ENCODE measurements at regions of chr18 and their contacts with region 1.

Region 1: GRCh38 chr18:54269893-54270844 is 852 bp downstream of the POLI start:
- DNase-seq: peak; percentile 57
- ATAC-seq: peak; percentile 88
- H3K4me3 Mint-ChIP-seq: peak overlapping the region; percentile 79
- H3K27ac Mint-ChIP-seq: peak overlapping the region; percentile 98
- H3K4me1 Mint-ChIP-seq: peaks cover 32% of the 10 kb centered on the region
- H3K27me3 Mint-ChIP-seq: no peaks in the 10 kb centered on the region
- CTCF ChIP-seq: peak; percentile 11; the same call in 1 of the 2 replicates

Region 2: GRCh38 chr18:54224379-54225014 is 45.7 kb before region 1 on chr18 and contains the start of gene MBD2:
- CTCF ChIA-PET with region 1: interaction called, 21 read pairs
- POLR2A ChIA-PET with region 1: interaction called, 11 read pairs
- DNase-seq: peak; percentile 95
- ATAC-seq: peak; percentile 97
- H3K4me3 Mint-ChIP-seq: peak within 1 kb of the TSS; percentile 90
- H3K27ac Mint-ChIP-seq: peak within 1 kb of the TSS; percentile 91
- H3K4me1 Mint-ChIP-seq: peaks cover 52% of the 10 kb centered on the region
- H3K27me3 Mint-ChIP-seq: no peaks in the 10 kb centered on the region
- CTCF ChIP-seq: no peak
- total RNA-seq, gene MBD2: 32.8 to 42.7 TPM (median 37.4 TPM) in 3 replicates

Region 3: DNA sequence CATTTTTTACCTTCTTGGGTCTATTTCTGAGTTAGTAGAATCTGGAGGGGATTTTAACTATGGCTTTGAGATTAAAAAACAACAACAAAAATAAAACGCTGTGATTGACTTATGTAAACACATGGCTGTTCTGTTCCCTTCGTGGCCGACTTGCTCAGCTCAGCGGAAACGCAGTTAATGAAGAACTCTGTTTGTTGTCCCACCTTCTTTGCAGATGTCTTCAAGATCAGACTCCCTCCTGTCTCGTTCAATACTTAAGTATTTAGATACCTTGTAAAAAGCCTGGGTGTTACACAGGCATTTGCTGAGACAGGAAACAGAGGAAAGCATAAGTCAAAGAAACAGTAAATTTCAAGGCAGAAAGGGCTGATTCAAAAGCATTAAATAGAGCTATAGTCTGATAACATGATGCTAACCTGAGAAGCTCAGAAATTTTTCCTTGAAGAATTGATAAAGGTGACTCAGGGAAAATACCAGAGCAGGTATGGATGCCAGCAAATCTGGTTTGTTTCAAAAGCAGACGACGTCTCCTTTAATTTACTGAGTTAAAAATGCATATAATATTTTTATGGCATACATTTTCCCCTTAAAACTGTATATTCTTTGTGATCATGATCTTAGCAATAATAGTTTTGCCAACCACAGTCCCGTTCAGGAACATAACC is 22.5 kb before region 1 on chr18:
- CTCF ChIA-PET with region 1: interaction called, 18 read pairs
- POLR2A ChIA-PET with region 1: interaction called, 20 read pairs
- DNase-seq: no peak
- ATAC-seq: peak; percentile 21
- H3K4me3 Mint-ChIP-seq: peak overlapping the region; percentile 42
- H3K27ac Mint-ChIP-seq: peak overlapping the region; percentile 99
- H3K4me1 Mint-ChIP-seq: peaks cover 48% of the 10 kb centered on the region
- H3K27me3 Mint-ChIP-seq: no peaks in the 10 kb centered on the region; the same call in 1 of the 2 replicates
- CTCF ChIP-seq: no peak

Region 4: GRCh38 chr18:54626779-54627178 is 356.6 kb after region 1 on chr18:
- CTCF ChIA-PET with region 1: no interaction called
- POLR2A ChIA-PET with region 1: no interaction called
- DNase-seq: no peak
- ATAC-seq: no peak
- H3K4me3 Mint-ChIP-seq: no peak overlapping the region
- H3K27ac Mint-ChIP-seq: no peak overlapping the region
- H3K4me1 Mint-ChIP-seq: peaks cover 5% of the 10 kb centered on the region; the same call in 1 of the 2 replicates
- H3K27me3 Mint-ChIP-seq: no peaks in the 10 kb centered on the region
- CTCF ChIP-seq: no peak

Measured in WTC11 (cell line).